B cell (primary cell): ENCODE measurements at regions of chr22 and their contacts with region 1.

Region 1: DNA sequence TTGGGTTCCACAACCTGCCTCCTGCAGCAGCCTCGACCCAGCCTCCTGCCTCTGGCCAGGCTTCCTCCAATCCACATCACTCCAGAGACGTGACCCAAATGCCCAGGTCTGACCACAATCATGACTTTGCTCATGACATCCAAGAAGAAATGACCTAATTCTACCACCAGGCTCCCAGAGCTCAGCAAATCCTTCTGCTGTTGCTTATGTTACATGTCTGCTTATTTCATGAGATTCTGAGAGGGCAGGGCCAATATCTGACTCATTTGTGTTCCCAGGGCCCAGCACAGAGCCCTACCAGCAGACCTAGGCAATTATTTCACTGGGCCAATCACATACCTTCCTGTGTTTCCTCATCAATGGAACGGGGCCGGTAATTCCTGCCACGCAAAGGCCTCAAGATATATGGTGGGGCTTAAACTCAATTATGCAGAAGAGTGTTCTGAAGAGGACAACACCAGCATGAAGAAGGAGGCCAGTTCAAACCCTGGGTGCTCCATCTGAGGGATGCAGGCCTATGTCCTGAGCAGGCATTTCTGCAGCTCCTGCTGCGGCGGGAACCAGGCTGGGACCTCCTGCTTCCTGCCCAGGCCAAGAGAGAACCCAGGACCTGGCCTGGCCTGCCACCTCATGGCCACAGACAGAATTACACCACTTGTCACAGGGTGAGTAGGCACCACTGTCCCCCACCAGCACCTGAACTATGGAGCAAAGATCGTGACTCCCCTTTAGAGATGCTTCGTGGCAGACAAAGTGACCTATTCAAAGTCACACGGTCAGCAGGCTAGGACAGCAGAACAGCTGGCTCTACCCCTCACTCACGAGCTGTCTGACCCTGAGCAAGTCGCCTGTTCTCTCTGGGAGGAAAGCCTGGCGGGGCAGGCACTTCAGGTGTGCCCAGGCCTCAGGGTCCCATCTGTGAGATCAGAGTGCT is 5.9 kb downstream of the CENPM start:
- DNase-seq: peak; percentile 92
- ATAC-seq: peak; percentile 48
- H3K4me3 ChIP-seq: peak overlapping the region in 1 of 5 experiments; percentile 21
- H3K4me3 Mint-ChIP-seq: peak overlapping the region; percentile 96
- H3K27ac ChIP-seq: peak overlapping the region; percentile 99
- H3K27ac Mint-ChIP-seq: peak overlapping the region; percentile 99
- H3K4me1 ChIP-seq: peaks cover 50 to 62% of the 10 kb centered on the region in 2 donors
- H3K4me1 Mint-ChIP-seq: peaks cover 55% of the 10 kb centered on the region
- H3K27me3 ChIP-seq: peaks cover 0 to 5% (median 0%) of the 10 kb centered on the region in 4 experiments
- H3K27me3 Mint-ChIP-seq: no peaks in the 10 kb centered on the region
- CTCF ChIP-seq: peak; percentile 93

Region 2: GRCh38 chr22:41688365-41689211 is 252.5 kb before region 1 on chr22 and contains the start of gene SNU13:
- CTCF ChIA-PET with region 1: interaction called, 6 read pairs
- POLR2A ChIA-PET with region 1: interaction called, 6 read pairs
- intact Hi-C with region 1: loop called (anchors 2 kb)
- DNase-seq: peak; percentile 96
- ATAC-seq: peak; percentile 91
- H3K4me3 ChIP-seq: peak within 1 kb of the TSS; percentile 74 to 99 (median 96)
- H3K4me3 Mint-ChIP-seq: peak within 1 kb of the TSS; percentile 91
- H3K27ac ChIP-seq: peak within 1 kb of the TSS; percentile 92 to 96
- H3K27ac Mint-ChIP-seq: peak within 1 kb of the TSS; percentile 97
- H3K4me1 ChIP-seq: peaks cover 10 to 23% of the 10 kb centered on the region in 2 donors
- H3K4me1 Mint-ChIP-seq: peaks cover 31% of the 10 kb centered on the region
- H3K27me3 ChIP-seq: no peaks in the 10 kb centered on the region
- H3K27me3 Mint-ChIP-seq: no peaks in the 10 kb centered on the region
- CTCF ChIP-seq: no peak
- total RNA-seq, gene SNU13: 108 and 114 TPM in 2 replicates

Region 3: DNA sequence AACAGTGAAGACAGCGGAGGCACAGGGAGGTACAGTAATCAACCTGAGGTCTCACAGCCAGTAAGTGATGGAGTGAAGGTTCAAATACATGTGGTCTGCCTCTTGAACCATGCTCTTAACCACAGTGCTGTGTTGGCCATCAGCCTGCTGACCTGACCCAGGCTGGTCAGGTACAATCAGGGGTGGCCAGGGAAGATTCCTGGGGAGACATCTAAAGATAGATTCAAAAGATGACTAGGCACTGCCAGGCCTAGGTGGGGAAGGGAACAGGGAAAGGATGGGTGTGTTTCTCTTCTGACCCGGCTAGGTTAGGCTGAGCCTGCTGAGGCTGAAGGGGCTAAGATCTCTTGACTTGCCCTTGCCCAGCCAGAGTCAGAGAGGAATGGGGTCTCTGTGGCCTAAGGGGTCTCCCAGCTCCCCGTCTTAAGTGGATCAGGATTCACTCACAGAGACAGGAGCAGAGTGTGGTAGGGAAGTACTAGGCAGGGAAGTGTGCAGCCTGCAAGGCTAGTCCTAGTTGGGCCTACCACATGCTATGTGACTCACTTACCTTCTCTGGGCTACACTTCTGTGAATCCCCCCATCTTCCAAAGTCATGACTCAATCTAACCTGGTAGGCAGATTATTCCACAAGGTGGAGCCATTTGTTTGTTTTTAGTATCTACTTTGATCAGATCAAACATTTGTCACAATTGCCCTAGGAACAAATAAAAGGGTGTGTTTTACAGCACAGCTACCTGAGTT is 118.6 kb before region 1 on chr22:
- CTCF ChIA-PET with region 1: interaction called, 45 read pairs
- POLR2A ChIA-PET with region 1: interaction called, 13 read pairs
- intact Hi-C with region 1: loop called (anchors 1 kb)
- DNase-seq: peak; percentile 85
- ATAC-seq: peak; percentile 84
- H3K4me3 ChIP-seq: no peak overlapping the region
- H3K4me3 Mint-ChIP-seq: no peak overlapping the region
- H3K27ac ChIP-seq: no peak overlapping the region
- H3K27ac Mint-ChIP-seq: peak overlapping the region; percentile 57
- H3K4me1 ChIP-seq: no peaks in the 10 kb centered on the region
- H3K4me1 Mint-ChIP-seq: peaks cover 7% of the 10 kb centered on the region
- H3K27me3 ChIP-seq: no peaks in the 10 kb centered on the region
- H3K27me3 Mint-ChIP-seq: no peaks in the 10 kb centered on the region
- CTCF ChIP-seq: peak; percentile 74

Region 4: GRCh38 chr22:41883400-41883799 is 57.7 kb before region 1 on chr22:
- CTCF ChIA-PET with region 1: interaction called, 12 read pairs
- POLR2A ChIA-PET with region 1: interaction called, 8 read pairs
- intact Hi-C with region 1: loop called (anchors 1 kb)
- DNase-seq: no peak
- ATAC-seq: no peak
- H3K4me3 ChIP-seq: no peak overlapping the region
- H3K4me3 Mint-ChIP-seq: peak overlapping the region; percentile 44
- H3K27ac ChIP-seq: peak overlapping the region; percentile 52 to 71
- H3K27ac Mint-ChIP-seq: peak overlapping the region; percentile 93
- H3K4me1 ChIP-seq: peaks cover 23 to 39% of the 10 kb centered on the region in 2 donors
- H3K4me1 Mint-ChIP-seq: peaks cover 71% of the 10 kb centered on the region
- H3K27me3 ChIP-seq: no peaks in the 10 kb centered on the region
- H3K27me3 Mint-ChIP-seq: no peaks in the 10 kb centered on the region
- CTCF ChIP-seq: no peak

Region 5: DNA sequence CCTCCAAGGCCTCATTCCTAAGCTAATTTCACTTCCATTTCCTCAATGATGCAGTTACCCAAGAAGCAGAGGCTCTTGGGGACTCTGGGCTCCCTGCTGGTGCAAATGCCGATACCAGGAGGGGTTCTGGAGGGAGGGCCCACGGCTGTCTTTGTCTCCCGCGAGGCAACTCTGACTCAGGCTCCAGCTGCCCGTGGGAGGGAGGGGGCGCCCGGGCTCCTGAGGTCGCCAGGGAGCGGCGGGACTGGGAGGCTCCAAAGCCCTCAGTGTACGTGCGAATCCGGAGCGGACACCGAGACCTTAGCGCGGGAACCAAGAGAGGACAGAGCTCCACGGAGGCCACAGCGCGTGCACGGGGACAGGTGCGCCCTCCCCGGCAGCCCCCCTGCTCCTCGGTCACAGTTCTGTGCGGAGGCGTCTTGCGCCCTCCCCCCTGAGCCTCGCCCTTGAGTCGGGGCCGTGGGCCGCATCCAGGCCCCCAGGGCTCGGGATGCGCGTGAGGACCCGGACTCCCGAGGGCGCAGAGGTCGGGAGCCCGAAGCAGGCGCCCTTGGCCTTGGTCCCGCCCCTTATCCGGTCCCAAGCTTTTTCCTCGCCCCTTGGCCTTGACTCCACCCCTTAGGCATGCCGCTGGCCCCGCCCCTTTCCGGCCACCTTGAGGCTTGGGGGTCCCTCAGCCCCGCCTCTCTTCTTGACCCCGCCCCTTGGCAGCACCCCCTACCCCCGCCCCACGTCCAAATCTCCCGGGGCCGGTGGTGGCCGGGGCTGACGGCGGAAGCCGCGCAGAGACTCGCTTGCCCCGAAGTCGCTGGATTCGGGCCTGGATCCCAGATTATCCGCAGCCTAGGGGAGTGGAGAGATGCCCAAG is 21.5 kb before region 1 on chr22:
- CTCF ChIA-PET with region 1: interaction called, 499 read pairs
- POLR2A ChIA-PET with region 1: interaction called, 960 read pairs
- intact Hi-C with region 1: loop called (anchors 1 kb)
- DNase-seq: peak; percentile 93
- ATAC-seq: peak; percentile 54
- H3K4me3 ChIP-seq: peak overlapping the region; percentile 14 to 60 (median 52)
- H3K4me3 Mint-ChIP-seq: peak overlapping the region; percentile 86
- H3K27ac ChIP-seq: peak overlapping the region; percentile 89 to 93
- H3K27ac Mint-ChIP-seq: peak overlapping the region; percentile 97
- H3K4me1 ChIP-seq: peaks cover 79 to 86% of the 10 kb centered on the region in 2 donors
- H3K4me1 Mint-ChIP-seq: peaks cover 78% of the 10 kb centered on the region
- H3K27me3 ChIP-seq: peaks cover 0 to 8% (median 3%) of the 10 kb centered on the region in 4 experiments
- H3K27me3 Mint-ChIP-seq: no peaks in the 10 kb centered on the region
- CTCF ChIP-seq: no peak

Region 6: GRCh38 chr22:41968601-41969000 is 27.5 kb after region 1 on chr22:
- CTCF ChIA-PET with region 1: no interaction called
- POLR2A ChIA-PET with region 1: no interaction called
- intact Hi-C with region 1: no loop called
- DNase-seq: no peak
- ATAC-seq: no peak
- H3K4me3 ChIP-seq: no peak overlapping the region
- H3K4me3 Mint-ChIP-seq: no peak overlapping the region
- H3K27ac ChIP-seq: no peak overlapping the region
- H3K27ac Mint-ChIP-seq: no peak overlapping the region
- H3K4me1 ChIP-seq: no peaks in the 10 kb centered on the region
- H3K4me1 Mint-ChIP-seq: no peaks in the 10 kb centered on the region
- H3K27me3 ChIP-seq: peaks cover 0 to 23% (median 7%) of the 10 kb centered on the region in 4 experiments
- H3K27me3 Mint-ChIP-seq: peaks cover 14% of the 10 kb centered on the region
- CTCF ChIP-seq: no peak

Region 7: GRCh38 chr22:41979423-41980250 is 38.5 kb after region 1 on chr22:
- CTCF ChIA-PET with region 1: no interaction called
- POLR2A ChIA-PET with region 1: no interaction called
- intact Hi-C with region 1: no loop called
- DNase-seq: no peak
- ATAC-seq: no peak
- H3K4me3 ChIP-seq: no peak overlapping the region
- H3K4me3 Mint-ChIP-seq: no peak overlapping the region
- H3K27ac ChIP-seq: no peak overlapping the region
- H3K27ac Mint-ChIP-seq: no peak overlapping the region
- H3K4me1 ChIP-seq: peaks cover 10 to 12% of the 10 kb centered on the region in 2 donors
- H3K4me1 Mint-ChIP-seq: peaks cover 15% of the 10 kb centered on the region
- H3K27me3 ChIP-seq: peaks cover 0 to 36% (median 18%) of the 10 kb centered on the region in 4 experiments
- H3K27me3 Mint-ChIP-seq: peaks cover 31% of the 10 kb centered on the region
- CTCF ChIP-seq: no peak

Region 8: GRCh38 chr22:42007922-42008321 is 66.8 kb after region 1 on chr22:
- CTCF ChIA-PET with region 1: no interaction called
- POLR2A ChIA-PET with region 1: no interaction called
- intact Hi-C with region 1: no loop called
- DNase-seq: no peak
- ATAC-seq: no peak
- H3K4me3 ChIP-seq: no peak overlapping the region
- H3K4me3 Mint-ChIP-seq: no peak overlapping the region
- H3K27ac ChIP-seq: no peak overlapping the region
- H3K27ac Mint-ChIP-seq: no peak overlapping the region
- H3K4me1 ChIP-seq: no peaks in the 10 kb centered on the region
- H3K4me1 Mint-ChIP-seq: no peaks in the 10 kb centered on the region
- H3K27me3 ChIP-seq: no peaks in the 10 kb centered on the region
- H3K27me3 Mint-ChIP-seq: peaks cover 3% of the 10 kb centered on the region
- CTCF ChIP-seq: no peak

Region 9: GRCh38 chr22:42214633-42215415 is 273.7 kb after region 1 on chr22:
- CTCF ChIA-PET with region 1: no interaction called
- POLR2A ChIA-PET with region 1: no interaction called
- intact Hi-C with region 1: no loop called
- DNase-seq: no peak
- ATAC-seq: no peak
- H3K4me3 ChIP-seq: no peak overlapping the region
- H3K4me3 Mint-ChIP-seq: no peak overlapping the region
- H3K27ac ChIP-seq: no peak overlapping the region
- H3K27ac Mint-ChIP-seq: no peak overlapping the region
- H3K4me1 ChIP-seq: peaks cover 3 to 11% of the 10 kb centered on the region in 2 donors
- H3K4me1 Mint-ChIP-seq: peaks cover 29% of the 10 kb centered on the region
- H3K27me3 ChIP-seq: no peaks in the 10 kb centered on the region
- H3K27me3 Mint-ChIP-seq: no peaks in the 10 kb centered on the region
- CTCF ChIP-seq: no peak